Ovary (tissue), 10 donors: ENCODE measurements at regions of chr4 and their contacts with region 1.

Region 1: DNA sequence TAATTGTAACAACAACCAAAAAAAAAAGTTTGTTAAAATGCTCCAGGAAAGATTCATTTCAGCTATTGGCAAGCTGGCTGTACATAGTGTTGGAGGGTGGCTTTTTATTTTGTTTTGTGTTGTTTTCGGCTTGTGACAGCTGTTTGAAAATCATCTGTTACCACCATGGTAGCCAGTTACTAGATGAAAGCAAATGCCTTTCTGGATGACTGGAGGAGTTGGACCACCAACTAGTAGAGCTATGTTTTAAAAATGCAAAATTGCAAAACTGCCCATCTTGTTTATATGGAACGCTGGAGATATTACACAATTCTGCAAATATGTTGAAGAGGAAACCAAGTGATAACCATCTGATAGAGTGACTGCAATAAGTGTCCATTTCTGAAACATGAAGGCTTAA is 53.2 kb upstream of the TNIP3 start:
- DNase-seq: no peak
- H3K4me3 ChIP-seq: no peak overlapping the region
- H3K27ac ChIP-seq: no peak overlapping the region
- H3K4me1 ChIP-seq: no peaks in the 10 kb centered on the region
- H3K27me3 ChIP-seq: no peaks in the 10 kb centered on the region
- CTCF ChIP-seq: no peak
- EP300 ChIP-seq: no peak
- POLR2A ChIP-seq: no peak

Region 2: GRCh38 chr4:120355881-120356280 is 861.5 kb before region 1 on chr4:
- intact Hi-C with region 1: loop called in 1 of 4 experiments (anchors 5 kb)
- DNase-seq: no peak
- H3K4me3 ChIP-seq: no peak overlapping the region
- H3K27ac ChIP-seq: no peak overlapping the region
- H3K4me1 ChIP-seq: no peaks in the 10 kb centered on the region
- H3K27me3 ChIP-seq: no peaks in the 10 kb centered on the region
- CTCF ChIP-seq: no peak
- EP300 ChIP-seq: no peak
- POLR2A ChIP-seq: no peak

Region 3: DNA sequence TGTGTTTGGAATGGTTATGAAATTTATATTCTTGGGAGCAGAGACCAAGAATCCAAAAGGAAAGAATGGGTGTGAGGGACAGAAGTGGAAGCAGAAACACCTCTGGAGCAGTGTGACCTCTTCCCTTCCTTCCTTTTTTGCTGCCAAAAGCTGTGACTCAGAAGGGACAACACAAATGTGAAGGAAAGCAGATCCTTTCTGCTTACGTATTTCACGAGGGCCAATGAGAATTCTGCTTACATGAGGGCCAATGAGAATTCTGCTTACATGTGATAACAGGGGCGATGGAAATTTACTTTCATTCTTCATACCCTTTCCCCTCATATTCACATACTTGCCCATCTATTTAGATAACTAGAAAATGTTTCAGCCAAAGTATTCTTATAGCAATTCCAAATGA is 699.4 kb before region 1 on chr4:
- intact Hi-C with region 1: no loop called
- DNase-seq: peak in 4 of 5 donors; percentile 14 to 77 (median 23)
- H3K4me3 ChIP-seq: no peak overlapping the region
- H3K27ac ChIP-seq: peak overlapping the region in 1 of 2 donors; percentile 22
- H3K4me1 ChIP-seq: no peaks in the 10 kb centered on the region
- H3K27me3 ChIP-seq: no peaks in the 10 kb centered on the region
- CTCF ChIP-seq: no peak
- EP300 ChIP-seq: no peak
- POLR2A ChIP-seq: no peak

Region 4: GRCh38 chr4:121009578-121010478 is 207.5 kb before region 1 on chr4:
- intact Hi-C with region 1: no loop called
- DNase-seq: no peak
- H3K4me3 ChIP-seq: no peak overlapping the region
- H3K27ac ChIP-seq: no peak overlapping the region
- H3K4me1 ChIP-seq: no peaks in the 10 kb centered on the region
- H3K27me3 ChIP-seq: no peaks in the 10 kb centered on the region
- CTCF ChIP-seq: no peak
- EP300 ChIP-seq: no peak
- POLR2A ChIP-seq: no peak